ENCODE measurements at regions of chr1 and their contacts with region 1.

Region 1: DNA sequence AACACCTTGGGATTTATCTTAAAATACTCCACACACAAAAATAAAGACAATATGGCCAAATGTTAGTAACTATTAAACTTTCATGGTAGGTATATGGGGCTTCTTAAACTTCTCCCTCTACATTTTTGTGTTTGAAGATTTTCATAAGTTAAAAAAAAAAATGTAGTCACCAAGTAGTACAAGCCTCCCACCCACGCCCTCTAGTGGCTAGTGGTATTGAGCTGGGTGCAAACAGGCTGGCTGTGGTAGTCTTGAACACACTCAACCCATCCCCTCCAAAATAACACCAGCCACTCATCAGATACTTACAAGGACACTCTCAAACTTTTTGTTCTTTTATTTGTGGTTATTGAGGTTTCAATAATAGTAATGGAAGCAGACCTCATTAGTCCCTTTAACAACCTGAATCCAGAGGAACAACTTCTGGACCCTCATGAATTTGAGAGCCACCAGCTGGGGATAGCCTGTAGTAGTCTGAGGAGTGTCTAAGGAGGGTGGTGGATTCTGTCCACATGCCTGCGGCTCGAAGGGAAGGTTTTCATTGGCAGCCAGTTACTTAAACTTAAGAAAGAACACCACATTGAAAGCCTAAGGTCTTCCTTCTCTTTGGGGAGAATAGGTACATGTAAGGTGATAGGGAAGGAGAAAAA is 15.6 kb downstream of the RD3 start:
- DNase-seq: peak; percentile 77 to 87 (median 80)
- ATAC-seq: peak; percentile 91
- H3K4me3 ChIP-seq: no peak overlapping the region
- H3K27ac ChIP-seq: no peak overlapping the region
- H3K4me1 ChIP-seq: peaks cover 5 to 11% of the 10 kb centered on the region in 2 experiments; a peak in 3 of 5 replicates
- H3K27me3 ChIP-seq: peaks cover 29 to 36% of the 10 kb centered on the region in 2 experiments
- CTCF ChIP-seq: peak; percentile 89 to 92 (median 90)
- EP300 ChIP-seq: no peak
- POLR2A ChIP-seq: no peak
- RAD21 ChIP-seq: peak; percentile 78 to 81

Region 2: GRCh38 chr1:210448297-210448892 is 1027.9 kb before region 1 on chr1:
- CTCF ChIA-PET with region 1: no interaction called
- POLR2A ChIA-PET with region 1: no interaction called
- in situ Hi-C with region 1: no loop called
- intact Hi-C with region 1: loop called (anchors 10 kb)
- DNase-seq: peak; percentile 33 to 44 (median 41)
- ATAC-seq: peak; percentile 82
- H3K4me3 ChIP-seq: no peak overlapping the region
- H3K27ac ChIP-seq: no peak overlapping the region
- H3K4me1 ChIP-seq: no peaks in the 10 kb centered on the region
- H3K27me3 ChIP-seq: peaks cover 0 to 8% of the 10 kb centered on the region in 2 experiments; a peak in 3 of 5 replicates
- CTCF ChIP-seq: peak; percentile 42 to 73 (median 56); a peak in 5 of 6 replicates
- EP300 ChIP-seq: no peak
- POLR2A ChIP-seq: no peak
- RAD21 ChIP-seq: peak; percentile 88 to 89

Region 3: GRCh38 chr1:211492511-211493132 is 16.3 kb after region 1 on chr1:
- CTCF ChIA-PET with region 1: no interaction called
- POLR2A ChIA-PET with region 1: no interaction called
- in situ Hi-C with region 1: no loop called
- intact Hi-C with region 1: no loop called
- DNase-seq: no peak
- ATAC-seq: no peak
- H3K4me3 ChIP-seq: no peak overlapping the region
- H3K27ac ChIP-seq: no peak overlapping the region
- H3K4me1 ChIP-seq: peaks cover 17 to 26% of the 10 kb centered on the region in 2 experiments; a peak in 4 of 5 replicates
- H3K27me3 ChIP-seq: peaks cover 43 to 75% of the 10 kb centered on the region in 2 experiments
- CTCF ChIP-seq: no peak
- EP300 ChIP-seq: no peak
- POLR2A ChIP-seq: no peak
- RAD21 ChIP-seq: no peak